CD4-positive, alpha-beta memory T cell (primary cell): ENCODE measurements at regions of chr13 and their contacts with region 1.

Region 1: DNA sequence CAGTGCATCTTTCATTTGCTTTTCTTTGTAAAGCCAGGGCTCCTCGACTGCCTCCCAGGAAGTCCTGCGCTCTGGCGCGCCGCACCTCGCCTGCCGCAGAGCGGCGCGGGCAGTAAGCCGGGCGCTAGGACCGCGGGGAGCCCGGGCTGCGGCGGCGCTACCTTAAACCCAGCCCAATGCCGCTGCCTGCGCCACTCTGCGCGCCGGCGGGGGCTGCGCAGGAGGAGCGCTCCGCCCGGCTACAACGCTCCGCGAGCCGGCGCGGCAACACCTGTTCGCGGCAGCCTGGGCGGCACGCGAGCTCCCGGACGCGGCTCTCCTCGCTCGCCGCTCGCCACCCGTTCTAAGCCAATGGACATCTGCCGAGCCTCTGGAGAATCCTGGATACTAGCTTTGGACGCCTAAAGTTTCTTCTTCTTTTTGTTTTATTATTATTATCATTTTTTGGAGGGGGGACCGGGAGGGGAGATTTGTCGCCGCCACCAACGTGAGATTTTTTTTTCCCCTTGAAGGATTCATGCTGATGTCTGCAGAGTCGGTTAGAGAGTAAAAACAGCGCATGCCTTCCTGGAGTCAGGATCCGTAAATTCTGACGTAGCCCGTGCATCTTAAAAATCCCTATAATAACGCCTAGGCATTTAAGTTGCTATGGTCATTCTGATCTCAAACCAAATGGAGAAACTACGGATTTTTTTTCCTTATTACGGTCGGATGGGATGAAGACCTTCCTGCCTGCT is at the start of gene FGF9:
- DNase-seq: peak; percentile 83 to 89 (median 87)
- H3K4me3 ChIP-seq: peak within 1 kb of the TSS; percentile 69 to 86
- H3K4me3 Mint-ChIP-seq: peak within 1 kb of the TSS; percentile 89 to 98 (median 92)
- H3K27ac ChIP-seq: peak within 1 kb of the TSS; percentile 19
- H3K27ac Mint-ChIP-seq: peak within 1 kb of the TSS; percentile 65 to 93 (median 89)
- H3K4me1 ChIP-seq: peaks cover 45% of the 10 kb centered on the region
- H3K4me1 Mint-ChIP-seq: peaks cover 30 to 58% (median 40%) of the 10 kb centered on the region in 4 donors
- H3K27me3 ChIP-seq: peaks cover 11% of the 10 kb centered on the region
- H3K27me3 Mint-ChIP-seq: peaks cover 6 to 7% of the 10 kb centered on the region in 2 donors
- total RNA-seq, gene FGF9: 6.5 to 7.3 TPM

Region 2: DNA sequence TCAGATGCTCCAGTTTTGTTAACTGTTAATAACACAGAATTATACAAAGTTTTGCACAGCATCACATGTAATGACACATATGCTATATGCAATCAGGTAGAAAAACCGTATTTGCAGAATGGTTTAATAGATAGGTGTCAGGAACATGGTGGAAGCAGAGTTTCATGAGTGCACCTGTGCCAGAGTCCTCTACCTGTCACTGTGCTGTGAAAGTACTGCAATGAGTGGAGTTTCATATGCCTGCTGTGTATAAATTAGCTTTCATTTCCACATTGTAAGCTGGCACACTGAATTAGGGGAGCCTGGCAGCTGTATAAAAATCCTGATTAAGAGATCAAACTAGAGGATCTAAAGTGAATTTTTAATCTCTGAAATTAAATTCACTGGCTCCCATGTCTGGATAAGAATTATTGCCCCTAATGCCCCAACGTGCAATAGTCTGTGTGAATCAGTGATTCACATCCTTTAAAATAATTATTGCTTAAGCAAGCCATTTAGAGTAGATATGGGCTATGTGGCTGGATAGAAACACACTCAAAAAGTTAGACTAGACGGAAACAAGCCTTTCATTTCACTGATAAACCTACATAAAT is 888.8 kb before region 1 on chr13:
- CTCF ChIA-PET with region 1: no interaction called
- POLR2A ChIA-PET with region 1: no interaction called
- intact Hi-C with region 1: no loop called
- DNase-seq: no peak
- H3K4me3 ChIP-seq: no peak overlapping the region
- H3K4me3 Mint-ChIP-seq: no peak overlapping the region
- H3K27ac ChIP-seq: no peak overlapping the region
- H3K27ac Mint-ChIP-seq: peak overlapping the region in 1 of 7 donors; percentile 58
- H3K4me1 ChIP-seq: no peaks in the 10 kb centered on the region
- H3K4me1 Mint-ChIP-seq: peaks cover 0 to 6% (median 4%) of the 10 kb centered on the region in 4 donors
- H3K27me3 ChIP-seq: no peaks in the 10 kb centered on the region
- H3K27me3 Mint-ChIP-seq: no peaks in the 10 kb centered on the region

Region 3: GRCh38 chr13:21603531-21604448 is 67.3 kb before region 1 on chr13 and contains the start of gene MICU2:
- CTCF ChIA-PET with region 1: interaction called, 7 read pairs
- POLR2A ChIA-PET with region 1: interaction called, 77 read pairs
- intact Hi-C with region 1: loop called (anchors 1 kb)
- DNase-seq: peak; percentile 96 to 97 (median 97)
- H3K4me3 ChIP-seq: peak within 1 kb of the TSS; percentile 78 to 83
- H3K4me3 Mint-ChIP-seq: peak within 1 kb of the TSS; percentile 86 to 97 (median 89)
- H3K27ac ChIP-seq: peak within 1 kb of the TSS; percentile 85
- H3K27ac Mint-ChIP-seq: peak within 1 kb of the TSS; percentile 90 to 97 (median 95)
- H3K4me1 ChIP-seq: peaks cover 36% of the 10 kb centered on the region
- H3K4me1 Mint-ChIP-seq: peaks cover 28 to 58% (median 36%) of the 10 kb centered on the region in 4 donors
- H3K27me3 ChIP-seq: no peaks in the 10 kb centered on the region
- H3K27me3 Mint-ChIP-seq: peaks cover 4% of the 10 kb centered on the region in 2 donors
- total RNA-seq, gene MICU2: 46.0 to 50.3 TPM

Region 4: GRCh38 chr13:22161871-22162270 is 490.8 kb after region 1 on chr13:
- CTCF ChIA-PET with region 1: no interaction called
- POLR2A ChIA-PET with region 1: interaction called, 5 read pairs
- intact Hi-C with region 1: loop called (anchors 5 kb)
- DNase-seq: peak in 4 of 5 donors; percentile 4 to 36 (median 28)
- H3K4me3 ChIP-seq: peak overlapping the region in 1 of 2 donors; percentile 20
- H3K4me3 Mint-ChIP-seq: peak overlapping the region; percentile 73 to 86 (median 81)
- H3K27ac ChIP-seq: no peak overlapping the region
- H3K27ac Mint-ChIP-seq: peak overlapping the region; percentile 28 to 91 (median 79)
- H3K4me1 ChIP-seq: peaks cover 33% of the 10 kb centered on the region
- H3K4me1 Mint-ChIP-seq: peaks cover 29 to 46% (median 37%) of the 10 kb centered on the region in 4 donors
- H3K27me3 ChIP-seq: no peaks in the 10 kb centered on the region
- H3K27me3 Mint-ChIP-seq: no peaks in the 10 kb centered on the region